Dendritic cell treated with granulocyte-macrophage colony-stimulating factor and Interleukin-4, amounts not matched to agents 40 ng/mL and 50 ng/mL, for 4 days (primary cell): ENCODE measurements at regions of chr1 and their contacts with region 1.

Region 1: GRCh38 chr1:185483664-185484450 is 166.8 kb upstream of the IVNS1ABP start:
- H3K4me3 Mint-ChIP-seq: no peak overlapping the region
- H3K27ac Mint-ChIP-seq: peak overlapping the region; percentile 93
- H3K4me1 Mint-ChIP-seq: peaks cover 52% of the 10 kb centered on the region
- H3K27me3 Mint-ChIP-seq: peaks cover 3% of the 10 kb centered on the region

Region 2: GRCh38 chr1:185393815-185394214 is 90.0 kb before region 1 on chr1:
- intact Hi-C with region 1: no loop called
- H3K4me3 Mint-ChIP-seq: no peak overlapping the region
- H3K27ac Mint-ChIP-seq: no peak overlapping the region
- H3K4me1 Mint-ChIP-seq: peaks cover 3% of the 10 kb centered on the region
- H3K27me3 Mint-ChIP-seq: no peaks in the 10 kb centered on the region

Region 3: GRCh38 chr1:185534801-185535200 is 50.9 kb after region 1 on chr1:
- intact Hi-C with region 1: loop called (anchors 5 kb)
- H3K4me3 Mint-ChIP-seq: no peak overlapping the region
- H3K27ac Mint-ChIP-seq: peak overlapping the region; percentile 88
- H3K4me1 Mint-ChIP-seq: peaks cover 34% of the 10 kb centered on the region
- H3K27me3 Mint-ChIP-seq: no peaks in the 10 kb centered on the region